Endothelial cell of umbilical vein (primary cell): ENCODE measurements at regions of chr12 and their contacts with region 1.

Region 1: DNA sequence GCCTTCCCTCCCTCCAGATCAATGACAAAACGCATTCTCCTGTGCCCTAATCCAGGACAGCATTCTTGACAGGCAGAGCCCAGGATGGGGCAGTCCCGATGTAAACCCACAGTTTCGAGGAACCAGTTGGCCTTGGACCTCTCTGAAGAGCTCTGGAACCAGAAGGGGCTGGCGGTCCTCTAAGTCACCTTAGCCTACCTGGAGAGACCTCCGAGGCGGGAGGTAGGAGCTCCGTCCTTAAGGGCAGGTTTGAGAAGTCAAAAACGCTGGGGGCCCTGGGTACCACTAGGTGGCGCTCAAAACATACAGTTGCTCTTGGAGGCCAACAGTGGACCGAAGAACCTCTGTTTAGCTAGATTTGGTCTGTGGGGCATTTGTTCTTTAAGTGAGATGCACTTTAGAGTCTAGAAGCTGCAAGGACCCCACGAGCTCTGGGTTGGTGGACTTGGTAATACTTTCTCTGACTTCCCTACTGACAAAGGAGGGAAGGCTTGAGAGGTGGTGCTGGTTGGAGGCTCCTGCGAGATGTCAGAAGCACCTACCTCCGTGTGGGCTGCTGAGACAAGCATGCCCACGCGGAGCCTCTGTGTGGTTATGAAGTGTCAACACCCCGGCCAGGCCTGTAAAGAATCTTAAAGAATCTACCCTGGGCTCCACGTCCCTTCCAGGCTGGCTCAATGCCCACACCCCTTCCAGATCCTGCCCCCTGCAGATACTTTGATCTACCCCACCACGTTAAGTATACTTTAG is 74.8 kb upstream of the CHST11 start:
- DNase-seq: peak; percentile 77
- H3K4me3 ChIP-seq: no peak overlapping the region
- H3K27ac ChIP-seq: no peak overlapping the region
- H3K4me1 ChIP-seq: no peaks in the 10 kb centered on the region
- H3K27me3 ChIP-seq: no peaks in the 10 kb centered on the region
- CTCF ChIP-seq: peak; percentile 90 to 93
- POLR2A ChIP-seq: no peak

Region 2: GRCh38 chr12:103840876-103841689 is 540.8 kb before region 1 on chr12 and contains the start of gene NT5DC3:
- CTCF ChIA-PET with region 1: no interaction called
- POLR2A ChIA-PET with region 1: no interaction called
- dilution Hi-C with region 1: no loop called
- intact Hi-C with region 1: no loop called
- DNase-seq: peak; percentile 69
- H3K4me3 ChIP-seq: peak within 1 kb of the TSS; percentile 72 to 85 (median 75)
- H3K27ac ChIP-seq: no peak within 1 kb of the TSS
- H3K4me1 ChIP-seq: peaks cover 11% of the 10 kb centered on the region
- H3K27me3 ChIP-seq: no peaks in the 10 kb centered on the region
- CTCF ChIP-seq: no peak
- POLR2A ChIP-seq: peak; percentile 86
- total RNA-seq, gene NT5DC3: 6.4 and 6.7 TPM in 2 replicates

Region 3: GRCh38 chr12:104407922-104408321 is 26.0 kb after region 1 on chr12:
- CTCF ChIA-PET with region 1: interaction called, 20 read pairs
- POLR2A ChIA-PET with region 1: no interaction called
- dilution Hi-C with region 1: no loop called
- intact Hi-C with region 1: no loop called
- DNase-seq: no peak
- H3K4me3 ChIP-seq: no peak overlapping the region
- H3K27ac ChIP-seq: no peak overlapping the region
- H3K4me1 ChIP-seq: peaks cover 28% of the 10 kb centered on the region
- H3K27me3 ChIP-seq: no peaks in the 10 kb centered on the region
- CTCF ChIP-seq: no peak
- POLR2A ChIP-seq: no peak

Region 4: DNA sequence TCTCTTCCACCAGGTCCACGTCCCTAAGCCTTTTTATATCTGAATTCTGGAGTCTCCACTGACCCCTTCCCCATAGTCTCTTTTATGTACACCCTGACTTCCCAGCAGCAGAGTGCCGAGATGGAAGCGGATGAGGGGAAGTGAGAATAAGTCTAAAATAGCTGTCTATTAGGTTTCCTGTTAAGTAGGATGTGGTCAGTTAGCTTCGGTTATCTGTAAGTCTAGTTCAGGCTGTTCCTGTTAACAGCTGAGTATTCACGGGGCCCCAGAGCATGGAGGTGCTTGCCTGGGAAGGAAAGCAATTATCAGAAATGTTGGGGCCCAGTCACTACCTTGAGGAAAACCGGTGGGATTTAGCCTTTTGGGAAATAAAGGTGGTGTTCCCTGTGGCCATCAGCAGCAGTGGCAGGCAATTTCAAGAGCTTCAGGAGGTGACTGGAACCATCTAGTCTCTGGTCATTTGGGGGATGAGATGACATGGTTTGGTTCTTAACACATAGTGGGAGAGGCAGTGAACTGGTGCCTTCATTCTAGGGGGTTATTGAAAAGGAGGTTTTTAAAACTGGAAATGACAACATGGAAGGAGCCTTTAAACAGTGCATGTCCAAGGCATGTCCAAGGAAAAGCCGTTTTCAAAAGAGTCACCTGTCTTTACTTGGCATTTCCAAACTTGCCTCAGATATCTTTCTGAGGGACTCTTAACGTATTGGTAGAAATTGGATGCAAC is 96.7 kb after region 1 on chr12:
- CTCF ChIA-PET with region 1: interaction called, 10 read pairs
- POLR2A ChIA-PET with region 1: no interaction called
- dilution Hi-C with region 1: no loop called
- intact Hi-C with region 1: no loop called
- DNase-seq: peak; percentile 39
- H3K4me3 ChIP-seq: peak overlapping the region in 1 of 3 experiments; percentile 23
- H3K27ac ChIP-seq: peak overlapping the region; percentile 54
- H3K4me1 ChIP-seq: peaks cover 39% of the 10 kb centered on the region
- H3K27me3 ChIP-seq: no peaks in the 10 kb centered on the region
- CTCF ChIP-seq: no peak
- POLR2A ChIP-seq: no peak

Region 5: DNA sequence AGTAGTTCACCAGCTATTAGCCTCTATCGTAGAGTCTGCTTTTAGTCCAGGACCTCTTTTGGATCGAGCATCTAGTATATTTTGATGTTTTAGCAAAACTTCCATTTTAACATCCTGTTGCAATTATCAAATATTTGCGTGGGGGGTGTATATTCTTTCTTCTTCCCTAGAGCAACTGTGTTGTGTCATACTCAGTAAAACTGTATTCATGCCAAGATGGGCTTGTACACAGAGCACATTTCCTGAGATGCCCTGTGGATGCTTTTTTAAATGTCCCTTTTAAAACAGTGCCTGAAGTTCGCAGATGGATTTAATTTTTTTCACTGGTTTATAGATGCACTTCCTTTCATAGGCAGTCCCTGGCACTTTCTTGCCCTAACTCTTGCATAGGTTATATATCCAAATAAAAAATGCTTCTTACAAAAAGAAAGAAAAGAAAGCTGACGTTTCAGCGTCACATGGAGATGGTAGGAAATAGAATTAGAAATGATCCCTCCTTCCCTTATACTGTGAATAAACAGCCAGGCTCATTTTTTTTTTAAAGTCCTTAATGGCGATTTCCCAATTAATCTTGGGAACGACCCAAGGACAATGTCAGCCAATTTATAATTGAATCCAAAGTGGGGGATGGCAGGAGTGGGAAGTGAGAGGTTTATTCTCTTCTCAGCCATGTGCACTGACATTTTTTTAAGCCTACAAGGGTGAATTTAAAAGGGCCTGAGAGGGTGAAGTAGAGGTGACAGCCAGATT is 329.2 kb after region 1 on chr12:
- CTCF ChIA-PET with region 1: interaction called, 18 read pairs
- POLR2A ChIA-PET with region 1: no interaction called
- dilution Hi-C with region 1: no loop called
- intact Hi-C with region 1: no loop called
- DNase-seq: no peak
- H3K4me3 ChIP-seq: no peak overlapping the region
- H3K27ac ChIP-seq: no peak overlapping the region
- H3K4me1 ChIP-seq: no peaks in the 10 kb centered on the region
- H3K27me3 ChIP-seq: no peaks in the 10 kb centered on the region
- CTCF ChIP-seq: no peak
- POLR2A ChIP-seq: no peak

Region 6: DNA sequence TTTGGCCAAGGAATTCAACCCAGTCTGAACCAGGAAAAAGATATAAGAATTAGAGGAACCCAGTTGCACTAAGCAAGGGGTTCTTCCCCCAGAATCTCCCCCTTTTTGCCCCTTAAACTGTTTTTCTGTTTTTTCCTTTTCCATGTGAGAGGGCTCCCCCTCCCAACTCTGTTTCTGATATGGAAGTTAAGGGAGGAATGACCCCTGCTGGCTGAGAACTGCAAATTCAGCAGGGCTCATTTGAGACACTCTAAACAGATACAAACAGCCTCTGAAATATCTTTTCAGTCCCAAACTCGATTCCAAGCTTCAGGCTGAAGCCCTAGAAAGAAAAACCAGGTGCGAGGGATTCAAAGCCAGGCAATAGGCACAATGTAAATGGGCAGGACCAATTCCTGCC is 443.5 kb after region 1 on chr12:
- CTCF ChIA-PET with region 1: interaction called, 14 read pairs
- POLR2A ChIA-PET with region 1: no interaction called
- dilution Hi-C with region 1: no loop called
- intact Hi-C with region 1: loop called (anchors 1 kb)
- DNase-seq: no peak
- H3K4me3 ChIP-seq: no peak overlapping the region
- H3K27ac ChIP-seq: no peak overlapping the region
- H3K4me1 ChIP-seq: no peaks in the 10 kb centered on the region
- H3K27me3 ChIP-seq: no peaks in the 10 kb centered on the region
- CTCF ChIP-seq: peak; percentile 16 to 35
- POLR2A ChIP-seq: no peak

Region 7: GRCh38 chr12:104877123-104877705 is 495.3 kb after region 1 on chr12:
- CTCF ChIA-PET with region 1: interaction called, 83 read pairs
- POLR2A ChIA-PET with region 1: no interaction called
- dilution Hi-C with region 1: no loop called
- intact Hi-C with region 1: loop called (anchors 1 kb)
- DNase-seq: peak; percentile 63
- H3K4me3 ChIP-seq: no peak overlapping the region
- H3K27ac ChIP-seq: no peak overlapping the region
- H3K4me1 ChIP-seq: no peaks in the 10 kb centered on the region
- H3K27me3 ChIP-seq: no peaks in the 10 kb centered on the region
- CTCF ChIP-seq: peak; percentile 27 to 50
- POLR2A ChIP-seq: no peak

Region 8: GRCh38 chr12:105100998-105101397 is 719.1 kb after region 1 on chr12:
- CTCF ChIA-PET with region 1: interaction called, 19 read pairs
- POLR2A ChIA-PET with region 1: no interaction called
- dilution Hi-C with region 1: no loop called
- intact Hi-C with region 1: loop called (anchors 2 kb)
- DNase-seq: peak; percentile 22
- H3K4me3 ChIP-seq: no peak overlapping the region
- H3K27ac ChIP-seq: no peak overlapping the region
- H3K4me1 ChIP-seq: peaks cover 4% of the 10 kb centered on the region
- H3K27me3 ChIP-seq: peaks cover 2 to 8% of the 10 kb centered on the region in 2 experiments
- CTCF ChIP-seq: no peak
- POLR2A ChIP-seq: no peak